GM10248 (cell line): ENCODE measurements at regions of chr20 and their contacts with region 1.

Region 1: DNA sequence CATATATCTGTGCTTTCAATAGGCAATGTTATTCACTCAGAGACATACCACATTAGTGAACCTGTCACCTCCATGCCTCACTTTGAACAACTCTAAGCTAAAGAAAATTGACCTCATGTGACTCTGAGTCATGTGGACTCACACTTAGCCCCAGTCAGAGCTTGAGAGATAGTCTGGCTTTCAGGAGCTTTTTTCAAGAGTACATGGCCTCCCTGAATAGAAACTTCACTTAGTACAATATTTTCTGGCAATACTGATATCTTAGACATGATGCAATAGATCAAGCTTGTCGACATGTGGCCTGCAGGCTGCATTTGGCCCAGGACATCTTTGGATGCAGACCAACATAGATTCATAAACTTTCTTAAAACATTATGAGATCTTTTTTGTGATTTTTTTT is 8.5 kb downstream of the SPTLC3 start:
- DNase-seq: no peak
- CTCF ChIP-seq: no peak

Region 2: DNA sequence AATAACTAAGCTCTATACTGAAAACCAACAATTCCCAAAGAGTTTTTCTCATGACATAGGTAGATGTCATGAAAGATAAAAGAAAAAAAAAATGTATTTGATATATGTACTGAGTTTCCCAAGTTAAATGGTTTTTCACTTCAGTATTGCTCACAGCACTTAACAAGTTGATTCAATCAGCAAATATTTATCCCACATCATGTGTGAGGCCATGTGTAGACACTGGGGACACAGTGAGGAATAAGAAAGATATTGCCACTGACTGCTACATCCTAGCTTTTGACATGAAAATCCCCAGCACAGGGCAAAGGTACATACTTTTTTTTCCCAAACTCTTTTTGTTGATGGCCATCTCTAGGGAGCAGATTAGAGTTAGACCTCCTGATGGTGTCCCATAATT is 16.9 kb after region 1 on chr20:
- CTCF ChIA-PET with region 1: interaction called, 14 read pairs
- POLR2A ChIA-PET with region 1: no interaction called
- DNase-seq: no peak
- CTCF ChIP-seq: no peak